Testis (tissue), 5 donors: ENCODE measurements at regions of chr22 and their contacts with region 1.

Region 1: DNA sequence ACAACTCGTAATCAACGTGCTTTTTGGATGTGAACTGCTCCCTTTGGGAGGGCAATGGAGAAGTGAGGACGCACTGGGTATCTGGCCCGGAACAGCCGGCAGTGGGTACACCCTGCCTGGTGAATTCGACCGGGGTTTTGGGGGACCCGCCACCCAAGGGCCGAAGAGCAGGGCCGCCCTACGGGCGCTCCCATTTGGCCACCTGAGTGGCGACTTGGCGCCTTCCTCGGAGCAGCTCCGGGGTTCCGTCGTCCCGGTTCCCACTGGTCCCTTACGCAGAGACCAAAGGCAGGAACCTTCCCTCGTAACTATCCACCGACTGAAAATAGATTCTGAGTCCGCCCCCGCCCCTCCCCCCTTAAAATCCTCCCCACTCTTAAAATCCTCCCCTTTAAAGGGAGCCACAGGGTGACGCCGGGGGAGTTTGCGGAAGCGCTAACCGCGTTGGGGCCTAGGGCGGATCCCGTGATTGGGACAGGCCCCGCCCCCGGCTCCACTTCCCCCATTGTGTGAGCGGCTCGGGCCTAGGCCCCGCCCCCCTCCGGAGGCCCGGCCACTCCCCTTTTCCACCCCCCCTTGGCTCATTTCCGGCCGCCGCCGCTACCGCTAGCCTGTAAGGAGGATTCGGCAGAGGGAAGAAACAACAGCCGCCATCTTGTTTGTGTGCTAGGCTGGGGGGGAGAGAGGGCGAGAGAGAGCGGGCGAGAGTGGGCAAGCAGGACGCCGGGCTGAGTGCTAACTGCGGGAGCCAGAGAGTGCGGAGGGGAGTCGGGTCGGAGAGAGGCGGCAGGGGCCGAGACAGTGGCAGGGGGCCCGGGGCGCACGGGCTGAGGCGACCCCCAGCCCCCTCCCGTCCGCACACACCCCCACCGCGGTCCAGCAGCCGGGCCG is 1.0 kb upstream of the EP300 start:
- DNase-seq: peak; percentile 99
- H3K4me3 ChIP-seq: peak overlapping the region; percentile 88 to 97
- H3K27ac ChIP-seq: peak overlapping the region; percentile 100
- H3K4me1 ChIP-seq: peaks cover 23% of the 10 kb centered on the region
- H3K27me3 ChIP-seq: no peaks in the 10 kb centered on the region
- CTCF ChIP-seq: no peak
- POLR2A ChIP-seq: peak; percentile 96

Region 2: GRCh38 chr22:40950962-40951794 is 140.2 kb before region 1 on chr22 and contains the start of gene RBX1:
- intact Hi-C with region 1: loop called (anchors 2 kb)
- DNase-seq: peak; percentile 100
- H3K4me3 ChIP-seq: peak within 1 kb of the TSS; percentile 87 to 89
- H3K27ac ChIP-seq: peak within 1 kb of the TSS; percentile 95 to 97
- H3K4me1 ChIP-seq: peaks cover 12% of the 10 kb centered on the region
- H3K27me3 ChIP-seq: no peaks in the 10 kb centered on the region
- CTCF ChIP-seq: peak in 1 of 3 experiments; percentile 14
- POLR2A ChIP-seq: peak; percentile 51
- total RNA-seq, gene RBX1: 45.2 to 47.1 TPM

Region 3: DNA sequence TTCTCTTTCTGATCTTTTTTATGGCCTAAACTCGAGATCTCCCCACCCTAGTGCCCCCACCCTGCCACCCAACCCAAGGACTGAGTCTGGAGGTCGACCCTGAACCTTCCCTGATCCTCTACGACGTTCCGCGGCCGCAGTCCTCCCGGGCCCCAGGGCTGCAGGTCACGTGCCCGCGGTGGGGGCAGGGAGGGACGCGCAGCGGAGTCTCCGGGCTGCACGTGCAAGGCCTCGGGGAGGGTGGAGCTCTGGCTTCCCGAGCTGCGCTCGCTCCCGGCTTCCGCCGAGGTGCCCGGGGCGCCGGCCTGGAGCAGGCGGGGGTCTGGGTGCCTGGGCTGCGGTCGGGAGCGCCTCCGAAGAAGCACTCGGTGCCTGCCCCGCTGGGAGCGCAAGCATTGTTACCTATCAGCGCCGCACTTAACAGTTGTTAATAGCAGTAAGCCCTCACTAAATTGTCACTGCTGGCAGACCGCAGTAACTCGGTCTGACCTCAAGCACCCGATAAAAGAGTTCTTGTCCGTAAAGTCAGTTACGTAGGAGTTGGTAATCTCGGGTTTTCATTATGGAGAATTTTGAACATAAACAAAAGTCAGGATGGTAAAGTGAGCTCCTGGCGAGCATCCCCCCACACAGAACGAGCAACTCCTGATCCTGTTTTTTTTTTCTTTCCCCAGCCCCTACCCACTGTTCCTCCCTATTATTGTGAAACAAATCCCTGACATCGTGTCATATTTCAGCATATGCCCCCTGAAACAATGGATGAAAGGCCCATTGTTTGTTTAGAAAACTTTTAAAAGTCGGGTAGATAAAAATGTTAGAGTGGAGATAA is 68.7 kb before region 1 on chr22:
- intact Hi-C with region 1: loop called (anchors 5 kb)
- DNase-seq: peak; percentile 95
- H3K4me3 ChIP-seq: peak overlapping the region; percentile 72 to 84
- H3K27ac ChIP-seq: peak overlapping the region; percentile 97
- H3K4me1 ChIP-seq: peaks cover 11% of the 10 kb centered on the region
- H3K27me3 ChIP-seq: no peaks in the 10 kb centered on the region
- CTCF ChIP-seq: peak in 1 of 3 experiments; percentile 3
- POLR2A ChIP-seq: peak; percentile 9